ENCODE measurements at regions of chr18 and their contacts with region 1.

Region 1: DNA sequence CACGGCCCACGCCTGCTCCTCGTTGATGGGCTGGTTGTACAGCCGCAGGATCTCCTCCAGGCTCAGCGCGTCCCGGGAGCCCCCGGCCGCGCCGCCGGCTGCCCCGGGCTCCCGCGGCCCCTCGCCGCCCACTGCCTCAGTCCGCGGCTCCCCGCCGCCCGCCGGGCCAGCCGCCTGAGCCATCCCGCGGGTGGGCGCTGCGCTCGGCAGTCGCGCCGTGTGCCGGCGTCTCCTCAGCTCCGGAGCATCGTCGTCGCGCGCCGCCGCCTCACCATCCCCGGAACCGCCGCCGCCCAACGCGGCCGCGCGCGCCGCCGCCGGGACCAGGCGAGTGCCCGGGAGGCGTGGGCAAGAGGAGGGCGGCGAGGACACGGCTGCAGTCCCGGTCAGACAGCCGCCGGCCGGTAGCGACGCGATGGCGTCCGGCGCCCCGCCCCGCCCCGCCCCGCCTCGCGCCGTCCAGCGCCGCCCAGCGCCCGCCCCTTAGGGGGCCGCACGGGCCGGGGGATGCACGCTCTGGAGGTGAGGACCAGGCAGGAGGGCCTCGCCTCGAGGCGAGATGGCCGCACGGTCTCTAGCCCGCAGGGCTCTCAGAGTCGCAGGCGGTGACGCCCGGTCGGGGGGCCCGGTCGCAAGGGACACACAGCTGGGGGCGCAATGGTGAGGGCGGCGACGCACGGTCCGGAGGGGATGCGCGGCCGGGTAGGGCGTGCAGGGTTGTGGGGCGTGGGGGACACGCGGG is at the start of gene SPIRE1:
- DNase-seq: peak; percentile 72
- H3K4me3 ChIP-seq: peak within 1 kb of the TSS; percentile 65 to 99 (median 92)
- H3K27ac ChIP-seq: peak within 1 kb of the TSS; percentile 99
- H3K4me1 ChIP-seq: peaks cover 43% of the 10 kb centered on the region
- H3K27me3 ChIP-seq: no peaks in the 10 kb centered on the region
- CTCF ChIP-seq: no peak
- POLR2A ChIP-seq: peak; percentile 83
- total RNA-seq, gene SPIRE1: 44.0 and 44.8 TPM in 2 replicates

Region 2: GRCh38 chr18:12376718-12377555 is 280.9 kb before region 1 on chr18 and contains the start of gene AFG3L2:
- CTCF ChIA-PET with region 1: no interaction called
- POLR2A ChIA-PET with region 1: no interaction called
- dilution Hi-C with region 1: no loop called
- intact Hi-C with region 1: loop called (anchors 5 kb)
- DNase-seq: peak; percentile 100
- H3K4me3 ChIP-seq: peak within 1 kb of the TSS; percentile 62 to 85 (median 72)
- H3K27ac ChIP-seq: peak within 1 kb of the TSS; percentile 89
- H3K4me1 ChIP-seq: peaks cover 9% of the 10 kb centered on the region
- H3K27me3 ChIP-seq: no peaks in the 10 kb centered on the region
- CTCF ChIP-seq: no peak
- POLR2A ChIP-seq: peak; percentile 93
- total RNA-seq, gene AFG3L2: 40.6 and 42.4 TPM in 2 replicates

Region 3: GRCh38 chr18:12403601-12404506 is 254.0 kb before region 1 on chr18:
- CTCF ChIA-PET with region 1: interaction called, 3 read pairs
- POLR2A ChIA-PET with region 1: no interaction called
- dilution Hi-C with region 1: no loop called
- intact Hi-C with region 1: loop called (anchors 1 kb)
- DNase-seq: peak; percentile 68
- H3K4me3 ChIP-seq: no peak overlapping the region
- H3K27ac ChIP-seq: peak overlapping the region; percentile 21
- H3K4me1 ChIP-seq: peaks cover 16% of the 10 kb centered on the region
- H3K27me3 ChIP-seq: peaks cover 11 to 13% of the 10 kb centered on the region in 2 experiments
- CTCF ChIP-seq: no peak
- POLR2A ChIP-seq: no peak

Region 4: DNA sequence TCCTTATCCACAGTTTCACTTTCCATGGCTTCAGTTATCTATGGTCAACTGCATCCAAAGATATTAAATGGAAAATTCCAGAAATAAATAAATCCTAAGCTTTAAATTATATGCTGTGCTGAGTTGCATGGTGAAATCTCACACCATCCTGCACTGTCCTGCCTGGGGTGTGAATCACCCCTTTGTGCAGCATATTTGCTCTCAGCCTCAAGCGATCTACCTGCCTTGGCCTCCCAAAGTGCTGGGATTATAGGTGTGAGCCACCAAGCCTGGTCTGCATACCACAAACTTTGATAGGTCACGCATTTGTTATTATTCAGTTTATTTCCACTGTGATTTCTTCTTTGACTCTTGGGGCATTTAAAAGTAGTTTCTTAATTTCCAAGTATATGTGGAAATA is 117.1 kb before region 1 on chr18:
- CTCF ChIA-PET with region 1: interaction called, 3 read pairs
- POLR2A ChIA-PET with region 1: no interaction called
- dilution Hi-C with region 1: no loop called
- intact Hi-C with region 1: loop called (anchors 1 kb)
- DNase-seq: no peak
- H3K4me3 ChIP-seq: no peak overlapping the region
- H3K27ac ChIP-seq: no peak overlapping the region
- H3K4me1 ChIP-seq: no peaks in the 10 kb centered on the region
- H3K27me3 ChIP-seq: no peaks in the 10 kb centered on the region
- CTCF ChIP-seq: no peak
- POLR2A ChIP-seq: no peak

Region 5: DNA sequence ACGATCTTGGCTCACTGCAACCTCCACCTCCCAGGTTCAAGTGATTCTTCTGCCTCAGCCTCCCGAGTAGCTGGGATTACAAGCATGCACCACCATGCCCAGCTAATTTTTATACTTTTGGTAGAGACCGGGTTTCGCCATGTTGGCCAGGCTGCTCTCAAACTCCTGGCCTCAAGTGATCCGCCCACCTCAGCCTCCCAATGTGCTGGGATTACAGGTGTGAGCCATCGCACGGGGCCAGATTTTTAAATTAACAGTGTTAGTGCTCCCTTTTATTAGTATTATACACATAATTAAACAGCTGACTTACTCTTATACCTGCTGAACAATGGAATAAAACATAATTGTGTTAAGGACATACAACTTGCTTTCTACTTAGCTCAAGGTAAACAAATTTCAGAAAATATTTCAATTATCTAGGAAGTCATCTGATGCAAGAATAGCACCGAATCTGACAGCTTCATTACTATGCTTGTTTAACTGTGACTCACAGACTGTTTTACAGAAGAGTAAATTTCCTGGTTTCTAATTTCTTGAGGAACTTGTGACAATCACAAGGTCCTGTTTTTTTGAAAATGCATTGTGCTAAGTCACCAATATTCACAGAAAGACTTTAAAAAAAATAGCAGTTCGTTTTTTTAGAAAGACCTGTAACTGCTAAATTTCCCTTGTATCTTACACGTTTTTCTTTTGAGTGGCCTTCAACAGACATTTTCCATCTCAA is 51.1 kb before region 1 on chr18:
- CTCF ChIA-PET with region 1: interaction called, 3 read pairs
- POLR2A ChIA-PET with region 1: no interaction called
- dilution Hi-C with region 1: no loop called
- intact Hi-C with region 1: loop called (anchors 2 kb)
- DNase-seq: peak; percentile 90
- H3K4me3 ChIP-seq: peak overlapping the region in 1 of 3 experiments; percentile 9
- H3K27ac ChIP-seq: peak overlapping the region; percentile 74
- H3K4me1 ChIP-seq: peaks cover 37% of the 10 kb centered on the region
- H3K27me3 ChIP-seq: no peaks in the 10 kb centered on the region
- CTCF ChIP-seq: no peak
- POLR2A ChIP-seq: no peak

Region 6: DNA sequence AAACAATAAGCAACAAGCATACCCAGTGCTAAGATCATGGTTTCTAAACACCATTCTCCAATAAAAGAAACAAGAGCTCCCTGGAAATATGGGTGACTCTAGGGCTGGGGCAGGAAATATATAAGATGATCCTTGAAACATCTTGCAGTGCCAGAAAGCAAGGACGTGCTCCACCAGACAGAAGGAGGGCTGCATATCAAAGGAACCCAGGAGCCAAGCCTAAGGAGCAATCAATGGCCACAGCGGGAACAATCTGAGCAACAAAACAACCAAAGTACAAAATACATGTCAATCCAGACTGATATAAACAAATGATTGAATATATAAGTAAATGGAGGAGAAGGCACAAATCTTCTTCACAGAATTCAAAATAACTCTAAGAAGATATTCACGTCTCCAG is 10.1 kb before region 1 on chr18:
- CTCF ChIA-PET with region 1: no interaction called
- POLR2A ChIA-PET with region 1: no interaction called
- dilution Hi-C with region 1: no loop called
- intact Hi-C with region 1: no loop called
- DNase-seq: no peak
- H3K4me3 ChIP-seq: no peak overlapping the region
- H3K27ac ChIP-seq: no peak overlapping the region
- H3K4me1 ChIP-seq: peaks cover 8% of the 10 kb centered on the region
- H3K27me3 ChIP-seq: no peaks in the 10 kb centered on the region
- CTCF ChIP-seq: no peak
- POLR2A ChIP-seq: no peak

Region 7: GRCh38 chr18:12692206-12692605 is 34.4 kb after region 1 on chr18:
- CTCF ChIA-PET with region 1: no interaction called
- POLR2A ChIA-PET with region 1: no interaction called
- dilution Hi-C with region 1: no loop called
- intact Hi-C with region 1: no loop called
- DNase-seq: no peak
- H3K4me3 ChIP-seq: no peak overlapping the region
- H3K27ac ChIP-seq: no peak overlapping the region
- H3K4me1 ChIP-seq: peaks cover 3% of the 10 kb centered on the region
- H3K27me3 ChIP-seq: no peaks in the 10 kb centered on the region
- CTCF ChIP-seq: no peak
- POLR2A ChIP-seq: no peak

Region 8: GRCh38 chr18:12702221-12703095 is 44.6 kb after region 1 on chr18 and contains the starts of genes CEP76 and PSMG2:
- CTCF ChIA-PET with region 1: interaction called, 4 read pairs
- POLR2A ChIA-PET with region 1: no interaction called
- dilution Hi-C with region 1: no loop called
- intact Hi-C with region 1: loop called (anchors 1 kb)
- DNase-seq: peak; percentile 94
- H3K4me3 ChIP-seq: peak within 1 kb of the TSS; percentile 53 to 90 (median 89)
- H3K27ac ChIP-seq: peak within 1 kb of the TSS; percentile 93
- H3K4me1 ChIP-seq: peaks cover 19% of the 10 kb centered on the region
- H3K27me3 ChIP-seq: no peaks in the 10 kb centered on the region
- CTCF ChIP-seq: no peak
- POLR2A ChIP-seq: peak; percentile 77
- total RNA-seq, gene CEP76: 8.6 and 8.8 TPM in 2 replicates
- total RNA-seq, gene PSMG2: 71.0 and 72.3 TPM in 2 replicates

Region 9: GRCh38 chr18:12838178-12838634 is 180.4 kb after region 1 on chr18:
- CTCF ChIA-PET with region 1: no interaction called
- POLR2A ChIA-PET with region 1: no interaction called
- dilution Hi-C with region 1: no loop called
- intact Hi-C with region 1: no loop called
- DNase-seq: no peak
- H3K4me3 ChIP-seq: no peak overlapping the region
- H3K27ac ChIP-seq: no peak overlapping the region
- H3K4me1 ChIP-seq: no peaks in the 10 kb centered on the region
- H3K27me3 ChIP-seq: no peaks in the 10 kb centered on the region
- CTCF ChIP-seq: no peak
- POLR2A ChIP-seq: no peak

Measured in endothelial cell of umbilical vein (primary cell).